Endothelial cell of umbilical vein (primary cell): ENCODE measurements at regions of chr12 and their contacts with region 1.

Region 1: DNA sequence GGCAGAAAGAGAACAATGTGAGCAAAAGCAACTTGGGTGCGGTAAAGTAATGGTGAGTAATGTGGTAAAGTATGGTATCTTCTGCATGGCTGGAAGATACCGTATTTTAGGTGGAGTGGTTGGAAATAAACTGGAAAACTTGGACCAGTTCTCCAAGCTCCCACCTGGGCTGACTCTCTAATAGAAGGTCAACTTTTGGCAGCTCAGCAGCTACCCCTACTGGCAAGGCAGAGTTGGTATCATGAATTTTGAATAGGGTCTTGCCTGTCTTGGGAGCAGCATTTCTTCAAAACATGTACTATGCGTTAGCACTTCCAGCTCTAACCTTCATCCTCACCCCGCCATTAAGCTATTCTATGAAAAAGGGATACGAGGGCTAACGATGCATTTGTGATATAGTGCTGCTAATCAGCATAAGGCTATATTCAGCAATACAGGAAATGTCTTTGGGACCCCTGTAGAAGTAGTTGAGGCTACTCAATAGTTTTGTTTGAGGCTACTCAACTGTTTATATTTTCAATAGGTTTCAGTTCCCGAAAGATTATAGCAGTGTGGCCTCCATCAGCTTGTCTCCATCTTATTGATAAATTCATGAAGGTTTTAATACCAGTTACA is 276.3 kb upstream of the FAR2 start:
- DNase-seq: peak; percentile 70
- H3K4me3 ChIP-seq: no peak overlapping the region
- H3K27ac ChIP-seq: no peak overlapping the region
- H3K4me1 ChIP-seq: no peaks in the 10 kb centered on the region
- H3K27me3 ChIP-seq: no peaks in the 10 kb centered on the region
- CTCF ChIP-seq: peak; percentile 69 to 74
- POLR2A ChIP-seq: no peak

Region 2: GRCh38 chr12:28172434-28173030 is 700.2 kb before region 1 on chr12:
- CTCF ChIA-PET with region 1: interaction called, 11 read pairs
- POLR2A ChIA-PET with region 1: no interaction called
- dilution Hi-C with region 1: no loop called
- intact Hi-C with region 1: loop called (anchors 1 kb)
- DNase-seq: peak; percentile 73
- H3K4me3 ChIP-seq: no peak overlapping the region
- H3K27ac ChIP-seq: no peak overlapping the region
- H3K4me1 ChIP-seq: no peaks in the 10 kb centered on the region
- H3K27me3 ChIP-seq: no peaks in the 10 kb centered on the region
- CTCF ChIP-seq: peak; percentile 56 to 62
- POLR2A ChIP-seq: no peak

Region 3: DNA sequence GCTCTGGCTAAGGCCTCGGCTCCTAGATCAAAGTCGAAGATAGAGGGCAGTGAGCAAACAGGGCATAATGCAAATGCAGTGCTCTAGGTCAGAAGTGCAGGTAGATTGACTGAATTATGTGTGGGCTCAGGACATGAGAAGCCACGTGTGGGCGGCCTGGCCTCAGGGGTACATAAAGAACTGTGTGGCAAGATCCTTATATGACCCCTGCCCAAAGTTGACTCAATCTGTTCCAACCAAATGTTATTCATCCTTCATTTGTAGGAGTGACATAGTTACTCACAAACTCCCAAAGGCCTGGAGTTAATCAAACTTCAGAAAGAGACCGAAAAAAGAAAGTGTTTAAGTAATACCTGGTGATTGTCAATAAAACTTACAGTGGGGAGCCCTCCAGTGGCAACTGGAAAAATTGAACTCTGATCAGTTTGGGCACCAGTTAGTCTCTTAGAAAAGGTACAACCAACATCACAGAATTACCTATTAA is 125.9 kb after region 1 on chr12:
- CTCF ChIA-PET with region 1: interaction called, 5 read pairs
- POLR2A ChIA-PET with region 1: no interaction called
- dilution Hi-C with region 1: no loop called
- intact Hi-C with region 1: loop called (anchors 5 kb)
- DNase-seq: peak; percentile 56
- H3K4me3 ChIP-seq: no peak overlapping the region
- H3K27ac ChIP-seq: no peak overlapping the region
- H3K4me1 ChIP-seq: no peaks in the 10 kb centered on the region
- H3K27me3 ChIP-seq: no peaks in the 10 kb centered on the region
- CTCF ChIP-seq: peak; percentile 37 to 53
- POLR2A ChIP-seq: no peak